Mammary epithelial cell (primary cell): ENCODE measurements at regions of chr14 and their contacts with region 1.

Region 1: GRCh38 chr14:70600382-70601157 is at the start of gene MED6:
- DNase-seq: peak; percentile 86
- H3K4me3 ChIP-seq: peak within 1 kb of the TSS; percentile 82 to 99 (median 97)
- H3K27ac ChIP-seq: peak within 1 kb of the TSS; percentile 87
- H3K4me1 ChIP-seq: peaks cover 11% of the 10 kb centered on the region
- H3K27me3 ChIP-seq: no peaks in the 10 kb centered on the region
- CTCF ChIP-seq: no peak
- total RNA-seq, gene MED6: 28.8 to 40.0 TPM

Region 2: DNA sequence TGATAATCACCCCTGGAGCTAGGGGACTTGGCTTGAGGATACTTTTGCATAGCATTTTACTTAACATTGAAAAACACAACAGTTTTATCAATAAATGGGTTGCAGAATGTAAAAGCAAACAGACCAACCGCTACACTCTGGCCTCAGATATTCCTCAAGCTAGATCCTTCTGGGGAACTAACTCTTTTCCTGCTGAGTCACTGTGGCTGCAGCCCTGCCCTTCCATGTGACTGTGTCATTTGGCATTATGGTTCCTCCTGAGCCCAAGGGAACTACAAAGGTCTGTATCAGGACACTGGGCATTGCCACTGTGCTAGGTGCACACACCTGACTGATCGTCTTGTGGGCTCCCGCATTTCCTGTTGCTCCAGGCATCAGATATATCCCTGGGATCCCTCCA is 97.7 kb after region 1 on chr14:
- CTCF ChIA-PET with region 1: no interaction called
- dilution Hi-C with region 1: loop called (anchors 5 kb)
- in situ Hi-C with region 1: no loop called
- intact Hi-C with region 1: no loop called
- DNase-seq: peak; percentile 58
- H3K4me3 ChIP-seq: no peak overlapping the region
- H3K27ac ChIP-seq: peak overlapping the region; percentile 32
- H3K4me1 ChIP-seq: peaks cover 17% of the 10 kb centered on the region
- H3K27me3 ChIP-seq: no peaks in the 10 kb centered on the region
- CTCF ChIP-seq: no peak

Region 3: GRCh38 chr14:70816525-70816924 is 216.0 kb after region 1 on chr14:
- CTCF ChIA-PET with region 1: no interaction called
- dilution Hi-C with region 1: no loop called
- in situ Hi-C with region 1: no loop called
- intact Hi-C with region 1: loop called (anchors 5 kb)
- DNase-seq: no peak
- H3K4me3 ChIP-seq: no peak overlapping the region
- H3K27ac ChIP-seq: no peak overlapping the region
- H3K4me1 ChIP-seq: peaks cover 30% of the 10 kb centered on the region
- H3K27me3 ChIP-seq: no peaks in the 10 kb centered on the region
- CTCF ChIP-seq: no peak

Region 4: GRCh38 chr14:70972107-70972976 is 371.8 kb after region 1 on chr14:
- CTCF ChIA-PET with region 1: no interaction called
- dilution Hi-C with region 1: no loop called
- in situ Hi-C with region 1: loop called in 1 of 2 experiments (anchors 25 kb)
- intact Hi-C with region 1: no loop called
- DNase-seq: peak; percentile 70
- H3K4me3 ChIP-seq: no peak overlapping the region
- H3K27ac ChIP-seq: no peak overlapping the region
- H3K4me1 ChIP-seq: no peaks in the 10 kb centered on the region
- H3K27me3 ChIP-seq: no peaks in the 10 kb centered on the region
- CTCF ChIP-seq: peak; percentile 85 to 92